Aorta (tissue), 5 donors: ENCODE measurements at regions of chr9 and their contacts with region 1.

Region 1: GRCh38 chr9:70534061-70534460 is 119.6 kb upstream of the KLF9 start:
- DNase-seq: no peak
- ATAC-seq: no peak
- H3K4me3 ChIP-seq: no peak overlapping the region
- H3K27ac ChIP-seq: no peak overlapping the region
- H3K4me1 ChIP-seq: no peaks in the 10 kb centered on the region
- H3K27me3 ChIP-seq: no peaks in the 10 kb centered on the region

Region 2: GRCh38 chr9:70455993-70456704 is 77.9 kb before region 1 on chr9:
- intact Hi-C with region 1: no loop called
- DNase-seq: no peak
- ATAC-seq: no peak
- H3K4me3 ChIP-seq: no peak overlapping the region
- H3K27ac ChIP-seq: peak overlapping the region in 1 of 2 donors; percentile 26
- H3K4me1 ChIP-seq: peaks cover 0 to 5% of the 10 kb centered on the region in 2 donors
- H3K27me3 ChIP-seq: no peaks in the 10 kb centered on the region

Region 3: DNA sequence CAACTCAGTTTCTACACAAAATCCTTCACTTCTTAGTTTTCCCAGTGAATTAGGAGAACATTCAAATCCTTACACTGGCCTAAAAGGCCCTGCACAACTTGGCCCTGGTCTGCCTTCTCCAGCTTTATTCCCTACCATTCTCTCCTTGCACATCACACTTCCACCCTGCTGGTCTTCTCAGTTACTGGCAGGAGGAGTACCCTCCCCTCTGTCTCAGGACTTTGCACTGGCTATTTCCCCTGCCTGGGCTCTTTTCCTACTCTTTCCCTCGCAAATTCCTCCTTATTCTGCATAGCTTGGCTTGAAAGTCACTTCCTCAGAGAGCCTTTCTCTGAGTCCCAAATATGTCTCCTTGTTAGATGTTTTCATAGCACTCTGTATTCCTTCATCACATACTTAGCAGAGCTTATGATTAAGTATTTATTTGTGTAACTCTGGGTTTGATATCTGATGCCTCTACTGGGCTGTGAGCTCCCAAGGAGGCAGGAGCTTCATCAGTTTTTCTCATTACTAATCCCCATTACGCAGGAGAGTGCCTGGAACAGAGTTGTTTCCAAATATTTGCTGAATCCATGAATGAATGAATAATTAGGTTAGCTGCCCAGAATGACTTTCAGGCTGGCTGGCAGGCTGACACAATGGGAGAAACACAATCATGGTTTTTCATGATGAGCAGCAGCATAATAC is 40.2 kb after region 1 on chr9:
- intact Hi-C with region 1: loop called in 1 of 2 experiments (anchors 5 kb)
- DNase-seq: peak in 1 of 2 donors; percentile 63
- ATAC-seq: peak; percentile 89
- H3K4me3 ChIP-seq: no peak overlapping the region
- H3K27ac ChIP-seq: peak overlapping the region in 1 of 2 donors; percentile 86
- H3K4me1 ChIP-seq: peaks cover 1 to 5% of the 10 kb centered on the region in 2 donors
- H3K27me3 ChIP-seq: no peaks in the 10 kb centered on the region

Region 4: GRCh38 chr9:70587201-70587600 is 53.1 kb after region 1 on chr9:
- intact Hi-C with region 1: loop called in 1 of 2 experiments (anchors 10 kb)
- DNase-seq: no peak
- ATAC-seq: peak; percentile 81
- H3K4me3 ChIP-seq: no peak overlapping the region
- H3K27ac ChIP-seq: peak overlapping the region; percentile 94 to 100
- H3K4me1 ChIP-seq: peaks cover 14 to 17% of the 10 kb centered on the region in 2 donors
- H3K27me3 ChIP-seq: no peaks in the 10 kb centered on the region